Ascending aorta (tissue), 2 donors: ENCODE measurements at regions of chr3 and their contacts with region 1.

Region 1: GRCh38 chr3:13452490-13453335 is 27.4 kb upstream of the HDAC11 start:
- DNase-seq: no peak
- H3K4me3 ChIP-seq: peak overlapping the region; percentile 54 to 68
- H3K27ac ChIP-seq: peak overlapping the region; percentile 71 to 80
- H3K4me1 ChIP-seq: peaks cover 0 to 7% of the 10 kb centered on the region in 2 donors
- H3K27me3 ChIP-seq: no peaks in the 10 kb centered on the region
- CTCF ChIP-seq: peak; percentile 42 to 63 (median 56)

Region 2: DNA sequence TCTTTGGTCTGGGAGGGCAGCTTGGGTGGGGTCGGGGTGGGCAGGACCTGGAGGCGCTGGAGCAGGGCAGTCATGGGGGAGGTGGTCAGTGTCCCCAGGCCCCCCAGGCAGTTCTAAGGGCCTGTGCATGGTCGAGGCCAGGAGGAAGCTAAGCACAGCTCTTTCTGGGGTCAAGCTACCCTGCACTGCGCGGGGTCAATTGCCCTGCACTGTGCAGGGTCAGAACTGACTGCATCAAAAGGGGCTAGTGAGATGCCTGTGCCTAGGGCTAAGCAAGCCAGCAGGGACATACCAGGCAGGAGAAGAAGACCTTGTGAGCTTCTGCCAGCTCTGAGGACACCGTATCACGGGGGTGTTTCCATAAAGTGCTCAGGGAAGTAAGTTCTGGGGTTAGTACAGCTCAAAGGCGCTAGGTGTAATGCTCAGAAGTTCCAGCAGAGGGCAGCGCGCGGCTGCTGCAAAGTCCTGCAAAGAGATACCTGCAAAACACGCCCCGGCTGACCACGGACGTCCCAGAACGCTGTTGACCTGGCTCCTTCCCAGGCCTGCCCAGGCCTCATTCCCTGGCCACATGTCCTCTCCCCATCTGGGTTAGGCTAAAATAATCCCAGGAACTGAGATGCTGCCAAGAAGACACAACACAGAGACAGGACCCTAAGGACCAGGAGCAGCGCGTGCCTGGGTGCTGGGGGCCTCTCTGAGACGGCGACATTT is 360.7 kb before region 1 on chr3:
- intact Hi-C with region 1: loop called (anchors 1 kb)
- DNase-seq: peak in 1 of 2 donors; percentile 90
- H3K4me3 ChIP-seq: peak overlapping the region in 1 of 2 donors; percentile 23
- H3K27ac ChIP-seq: no peak overlapping the region
- H3K4me1 ChIP-seq: no peaks in the 10 kb centered on the region
- H3K27me3 ChIP-seq: no peaks in the 10 kb centered on the region
- CTCF ChIP-seq: peak; percentile 88 to 95 (median 94)

Region 3: GRCh38 chr3:13173186-13173585 is 279.5 kb before region 1 on chr3:
- intact Hi-C with region 1: no loop called
- DNase-seq: no peak
- H3K4me3 ChIP-seq: no peak overlapping the region
- H3K27ac ChIP-seq: no peak overlapping the region
- H3K4me1 ChIP-seq: no peaks in the 10 kb centered on the region
- H3K27me3 ChIP-seq: no peaks in the 10 kb centered on the region
- CTCF ChIP-seq: no peak

Region 4: DNA sequence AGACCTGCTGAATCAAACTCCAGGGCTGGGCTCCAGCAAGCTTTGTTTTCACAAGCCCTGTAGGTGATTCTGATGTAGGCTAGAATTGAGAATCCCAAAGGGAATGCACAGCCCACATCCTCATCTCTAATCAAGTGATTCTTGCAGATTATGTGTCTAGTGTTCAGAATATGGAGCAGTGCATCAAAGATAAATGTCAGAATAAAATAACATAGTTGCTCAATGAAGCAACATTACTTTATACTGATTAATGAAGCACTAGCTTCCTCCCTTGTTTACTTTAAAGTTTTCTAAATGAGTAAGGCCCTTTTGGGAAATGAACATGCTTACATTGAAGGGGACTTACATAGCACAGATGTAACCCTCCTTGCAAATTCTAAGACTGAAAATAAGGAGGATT is 71.7 kb before region 1 on chr3:
- intact Hi-C with region 1: loop called (anchors 2 kb)
- DNase-seq: no peak
- H3K4me3 ChIP-seq: no peak overlapping the region
- H3K27ac ChIP-seq: peak overlapping the region; percentile 75 to 76
- H3K4me1 ChIP-seq: peaks cover 6 to 28% of the 10 kb centered on the region in 2 donors
- H3K27me3 ChIP-seq: no peaks in the 10 kb centered on the region
- CTCF ChIP-seq: no peak

Region 5: GRCh38 chr3:13479581-13480339 is 27.0 kb after region 1 on chr3 and contains the start of gene HDAC11:
- intact Hi-C with region 1: loop called (anchors 1 kb)
- DNase-seq: peak; percentile 91 to 99
- H3K4me3 ChIP-seq: peak within 1 kb of the TSS; percentile 78 to 87
- H3K27ac ChIP-seq: peak within 1 kb of the TSS; percentile 88 to 90
- H3K4me1 ChIP-seq: peaks cover 3% of the 10 kb centered on the region in 2 donors
- H3K27me3 ChIP-seq: no peaks in the 10 kb centered on the region
- CTCF ChIP-seq: peak in 1 of 3 experiments; percentile 27
- total RNA-seq, gene HDAC11: 15.8 TPM